GM12878 (cell line): ENCODE measurements at regions of chr6 and their contacts with region 1.

Region 1: GRCh38 chr6:135423649-135424128 is 73.9 kb downstream of the AHI1 start:
- DNase-seq: peak; percentile 16
- ATAC-seq: peak; percentile 97
- H3K4me3 ChIP-seq: no peak overlapping the region
- H3K27ac ChIP-seq: no peak overlapping the region
- H3K4me1 ChIP-seq: peaks cover 4% of the 10 kb centered on the region; the same call in 1 of the 2 replicates
- H3K27me3 ChIP-seq: no peaks in the 10 kb centered on the region
- CTCF ChIP-seq: peak; percentile 61 to 80 (median 68)
- EP300 ChIP-seq: no peak
- POLR2A ChIP-seq: no peak
- RAD21 ChIP-seq: peak; percentile 88

Region 2: DNA sequence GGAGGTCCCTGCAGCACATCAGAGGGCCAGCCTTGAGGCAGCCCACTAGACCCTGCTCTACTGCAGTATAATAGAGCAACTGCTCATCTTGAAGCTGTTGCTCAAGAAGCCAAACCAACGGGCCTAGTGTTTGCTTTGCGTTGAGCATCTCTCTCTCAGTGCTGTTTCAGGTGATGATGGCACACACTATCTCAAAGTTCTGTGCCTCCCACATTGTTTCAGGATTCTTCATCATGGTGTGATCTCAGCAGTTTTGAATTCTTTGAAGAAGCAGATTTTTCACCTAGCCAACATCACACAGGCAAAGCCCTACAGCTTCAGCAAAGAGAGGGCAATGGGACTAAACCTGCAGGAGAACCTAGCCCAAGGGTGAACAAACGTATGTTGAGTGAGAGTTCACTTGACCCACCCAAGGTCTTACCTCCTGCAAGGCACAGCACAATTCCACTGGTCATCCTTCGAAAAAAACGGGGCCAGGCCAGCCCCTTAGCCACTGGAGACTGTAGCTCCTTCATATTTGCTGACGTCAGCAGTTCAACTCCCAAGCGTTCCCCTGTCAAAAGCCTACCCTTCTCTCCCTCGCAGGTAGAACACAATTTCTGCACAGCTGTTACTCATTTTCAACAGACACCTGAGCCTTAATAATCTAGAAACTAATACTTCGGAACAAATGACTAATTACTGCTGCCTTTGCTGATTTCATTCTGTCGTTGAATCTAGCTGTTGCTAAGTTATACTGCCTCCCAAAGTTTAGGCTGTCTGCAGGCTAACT is 226.8 kb before region 1 on chr6:
- CTCF ChIA-PET with region 1: interaction called, 11 read pairs
- POLR2A ChIA-PET with region 1: no interaction called
- RAD21 ChIA-PET with region 1: interaction called, 6 read pairs
- SMC1A ChIA-PET with region 1: interaction called, 6 read pairs
- in situ Hi-C with region 1: no loop called
- intact Hi-C with region 1: no loop called
- DNase-seq: no peak
- ATAC-seq: peak; percentile 42; the same call in 2 of the 3 replicates
- H3K4me3 ChIP-seq: no peak overlapping the region
- H3K27ac ChIP-seq: no peak overlapping the region
- H3K4me1 ChIP-seq: no peaks in the 10 kb centered on the region
- H3K27me3 ChIP-seq: no peaks in the 10 kb centered on the region
- CTCF ChIP-seq: no peak
- EP300 ChIP-seq: no peak
- POLR2A ChIP-seq: no peak
- RAD21 ChIP-seq: no peak

Region 3: GRCh38 chr6:135233686-135234489 is 189.8 kb before region 1 on chr6:
- CTCF ChIA-PET with region 1: interaction called, 3 read pairs
- POLR2A ChIA-PET with region 1: no interaction called
- RAD21 ChIA-PET with region 1: no interaction called
- SMC1A ChIA-PET with region 1: interaction called, 3 read pairs
- in situ Hi-C with region 1: loop called (anchors 25 kb)
- intact Hi-C with region 1: loop called (anchors 5 kb)
- DNase-seq: no peak
- ATAC-seq: peak; percentile 66
- H3K4me3 ChIP-seq: no peak overlapping the region
- H3K27ac ChIP-seq: no peak overlapping the region; the same call in 1 of the 2 replicates
- H3K4me1 ChIP-seq: peaks cover 20% of the 10 kb centered on the region
- H3K27me3 ChIP-seq: peaks cover 0 to 2% of the 10 kb centered on the region in 2 experiments; a peak in 1 of 4 replicates
- CTCF ChIP-seq: no peak
- EP300 ChIP-seq: no peak
- POLR2A ChIP-seq: no peak
- RAD21 ChIP-seq: no peak

Region 4: DNA sequence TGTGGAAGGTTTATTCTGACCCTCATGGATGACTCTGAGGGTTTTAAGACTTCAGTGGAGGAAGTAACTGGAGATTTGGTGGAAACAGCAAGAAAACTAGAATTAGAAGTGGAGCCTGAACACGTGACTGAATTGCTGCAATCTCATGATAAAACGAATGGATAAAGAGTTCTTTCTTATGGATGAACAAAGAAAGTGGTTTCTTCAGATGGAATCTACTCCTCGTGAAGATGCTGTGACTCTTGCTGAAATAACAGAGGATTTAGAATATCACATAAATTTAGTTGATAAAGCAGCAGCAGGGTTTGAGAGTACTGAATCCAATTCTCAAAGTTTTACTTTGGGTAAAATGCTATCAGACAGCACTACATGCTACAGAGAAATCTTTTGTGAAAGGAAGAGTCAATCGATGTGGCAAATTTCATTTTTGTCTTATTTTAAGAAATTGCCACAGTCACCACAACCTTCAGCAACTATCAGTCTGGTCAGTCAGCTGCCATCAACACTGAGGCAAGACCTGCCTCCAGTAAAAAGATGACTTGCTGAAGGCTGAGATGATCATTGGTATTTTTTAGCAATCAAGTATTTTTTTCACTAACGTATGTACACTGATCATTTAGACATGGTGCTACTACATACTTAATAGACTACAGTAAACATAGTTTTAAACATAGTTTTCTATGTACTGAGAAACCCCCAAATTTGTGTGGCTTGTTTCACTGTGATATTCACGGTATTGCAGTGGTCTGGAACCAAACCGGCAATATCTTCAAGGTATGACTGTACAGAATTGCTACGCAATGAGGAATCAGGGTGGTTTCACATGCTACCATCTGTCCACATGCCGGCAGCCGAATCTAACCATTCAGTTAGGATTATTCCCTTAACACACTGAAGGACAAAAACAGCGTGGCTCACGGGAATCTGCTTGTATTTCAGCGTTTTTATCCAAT is 93.6 kb before region 1 on chr6:
- CTCF ChIA-PET with region 1: interaction called, 11 read pairs
- POLR2A ChIA-PET with region 1: no interaction called
- RAD21 ChIA-PET with region 1: interaction called, 3 read pairs
- SMC1A ChIA-PET with region 1: interaction called, 6 read pairs
- in situ Hi-C with region 1: no loop called
- intact Hi-C with region 1: loop called (anchors 2 kb)
- DNase-seq: peak; percentile 68
- ATAC-seq: peak; percentile 94
- H3K4me3 ChIP-seq: 0 out of 2 replicates have a peak overlapping the region, but pooled peaks have one; percentile 11
- H3K27ac ChIP-seq: peak overlapping the region; percentile 67
- H3K4me1 ChIP-seq: peaks cover 15% of the 10 kb centered on the region
- H3K27me3 ChIP-seq: no peaks in the 10 kb centered on the region
- CTCF ChIP-seq: peak in 2 of 3 experiments; percentile 2 to 9; a peak in 1 of 6 replicates
- EP300 ChIP-seq: peak; percentile 77 to 85; a peak in 3 of 4 replicates
- POLR2A ChIP-seq: no peak
- RAD21 ChIP-seq: peak; percentile 48